ENCODE measurements at regions of chr20 and their contacts with region 1.

Region 1: DNA sequence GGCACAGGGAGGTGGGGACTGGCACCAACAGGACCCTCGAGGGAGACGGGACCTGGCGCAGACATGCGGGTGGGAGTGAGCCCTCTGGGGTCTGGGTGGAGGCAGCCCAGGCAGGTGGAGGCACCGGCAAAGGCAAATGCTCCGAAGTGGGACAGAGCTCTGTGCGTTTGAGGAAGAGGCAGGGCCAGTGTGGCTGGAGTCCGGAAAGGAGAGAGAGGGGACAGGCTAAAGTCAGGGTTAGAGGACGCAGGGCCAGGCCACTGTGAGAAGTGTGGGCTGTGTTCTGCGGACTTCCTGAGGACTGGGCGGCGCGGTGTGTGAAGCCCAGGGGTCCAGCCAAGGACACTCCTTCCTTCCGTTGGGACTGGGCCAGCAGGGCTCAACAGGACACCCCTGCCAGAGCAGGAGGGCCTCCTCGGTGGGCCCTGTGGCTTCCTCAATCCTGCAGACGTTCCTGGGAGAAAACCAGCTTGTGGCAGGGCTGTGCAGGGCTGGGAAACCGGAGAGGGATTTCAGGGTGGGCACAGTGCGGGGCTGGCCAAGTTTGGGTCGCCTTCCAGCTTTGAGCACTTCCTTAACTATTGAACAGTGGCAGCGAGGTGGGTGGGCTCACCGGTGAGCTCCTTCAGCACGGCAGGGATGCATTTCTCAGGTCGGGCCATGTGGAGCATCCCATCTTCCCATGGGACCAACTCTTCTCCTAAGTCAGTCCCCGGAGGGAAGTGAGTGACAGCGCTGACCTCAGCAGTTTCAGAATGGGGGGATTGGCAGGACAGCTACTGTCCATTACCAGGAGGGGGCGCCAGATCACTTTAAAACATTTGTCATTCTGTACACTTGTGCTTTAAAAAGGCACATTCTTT is 22.5 kb downstream of the MOCS3 start:
- DNase-seq: no peak
- H3K4me3 ChIP-seq: no peak overlapping the region
- CTCF ChIP-seq: peak; percentile 77

Region 2: GRCh38 chr20:50967586-50967985 is 13.5 kb before region 1 on chr20:
- CTCF ChIA-PET with region 1: interaction called, 13 read pairs
- POLR2A ChIA-PET with region 1: no interaction called
- DNase-seq: no peak
- H3K4me3 ChIP-seq: no peak overlapping the region
- CTCF ChIP-seq: no peak

Region 3: DNA sequence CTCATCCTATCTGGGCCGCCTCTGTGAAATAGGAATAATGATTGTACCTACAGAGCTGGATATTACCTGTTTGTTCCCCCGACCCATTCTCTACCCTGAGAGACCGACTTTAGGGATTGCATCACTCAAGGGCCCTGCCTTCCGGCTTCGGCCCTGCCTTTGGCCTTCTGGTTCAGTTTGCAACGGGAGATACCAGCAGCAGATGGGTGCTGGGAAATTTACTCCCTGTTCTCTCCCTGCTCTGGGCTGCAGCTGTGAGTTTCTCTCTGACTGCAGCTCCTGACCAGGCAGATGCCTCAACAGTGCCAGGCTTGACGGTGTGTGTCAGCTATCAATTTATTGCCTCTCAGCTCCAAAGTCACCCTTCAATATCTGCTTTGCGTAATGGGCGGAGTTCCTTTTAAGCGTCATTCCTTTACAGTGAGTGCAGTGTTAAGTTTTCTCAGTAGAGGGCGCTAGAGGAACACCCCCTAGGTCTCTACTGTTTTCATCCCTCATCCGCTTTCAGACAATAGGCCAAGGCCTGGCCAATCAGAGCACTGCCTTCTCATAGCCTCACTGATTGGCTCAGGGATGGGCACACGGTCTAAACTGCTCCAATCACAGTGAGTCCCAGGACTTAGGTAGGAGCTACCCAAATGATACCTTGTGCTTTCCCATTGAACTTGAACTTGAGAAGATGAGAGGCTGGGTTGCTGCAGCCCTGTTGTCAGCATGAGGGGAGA is 11.8 kb after region 1 on chr20:
- CTCF ChIA-PET with region 1: interaction called, 84 read pairs
- POLR2A ChIA-PET with region 1: no interaction called
- DNase-seq: no peak
- H3K4me3 ChIP-seq: no peak overlapping the region
- CTCF ChIP-seq: peak; percentile 57

Region 4: GRCh38 chr20:51311606-51312495 is 330.8 kb after region 1 on chr20:
- CTCF ChIA-PET with region 1: interaction called, 626 read pairs
- POLR2A ChIA-PET with region 1: no interaction called
- DNase-seq: no peak
- H3K4me3 ChIP-seq: no peak overlapping the region
- CTCF ChIP-seq: no peak

Region 5: GRCh38 chr20:51326201-51326819 is 345.2 kb after region 1 on chr20:
- CTCF ChIA-PET with region 1: interaction called, 161 read pairs
- POLR2A ChIA-PET with region 1: interaction called, 4 read pairs
- DNase-seq: no peak
- H3K4me3 ChIP-seq: no peak overlapping the region
- CTCF ChIP-seq: no peak

Region 6: GRCh38 chr20:51335329-51335841 is 354.3 kb after region 1 on chr20:
- CTCF ChIA-PET with region 1: interaction called, 22 read pairs
- POLR2A ChIA-PET with region 1: no interaction called
- DNase-seq: peak; percentile 100
- H3K4me3 ChIP-seq: no peak overlapping the region
- CTCF ChIP-seq: peak; percentile 19

Region 7: GRCh38 chr20:51624157-51624731 is 643.2 kb after region 1 on chr20:
- CTCF ChIA-PET with region 1: interaction called, 122 read pairs
- POLR2A ChIA-PET with region 1: no interaction called
- DNase-seq: no peak
- H3K4me3 ChIP-seq: no peak overlapping the region
- CTCF ChIP-seq: peak; percentile 73

Measured in AG04449 (cell line).